ENCODE measurements at regions of chr2 and their contacts with region 1.

Region 1: GRCh38 chr2:85741833-85742455 is 11.8 kb upstream of the ATOH8 start:
- DNase-seq: no peak

Region 2: DNA sequence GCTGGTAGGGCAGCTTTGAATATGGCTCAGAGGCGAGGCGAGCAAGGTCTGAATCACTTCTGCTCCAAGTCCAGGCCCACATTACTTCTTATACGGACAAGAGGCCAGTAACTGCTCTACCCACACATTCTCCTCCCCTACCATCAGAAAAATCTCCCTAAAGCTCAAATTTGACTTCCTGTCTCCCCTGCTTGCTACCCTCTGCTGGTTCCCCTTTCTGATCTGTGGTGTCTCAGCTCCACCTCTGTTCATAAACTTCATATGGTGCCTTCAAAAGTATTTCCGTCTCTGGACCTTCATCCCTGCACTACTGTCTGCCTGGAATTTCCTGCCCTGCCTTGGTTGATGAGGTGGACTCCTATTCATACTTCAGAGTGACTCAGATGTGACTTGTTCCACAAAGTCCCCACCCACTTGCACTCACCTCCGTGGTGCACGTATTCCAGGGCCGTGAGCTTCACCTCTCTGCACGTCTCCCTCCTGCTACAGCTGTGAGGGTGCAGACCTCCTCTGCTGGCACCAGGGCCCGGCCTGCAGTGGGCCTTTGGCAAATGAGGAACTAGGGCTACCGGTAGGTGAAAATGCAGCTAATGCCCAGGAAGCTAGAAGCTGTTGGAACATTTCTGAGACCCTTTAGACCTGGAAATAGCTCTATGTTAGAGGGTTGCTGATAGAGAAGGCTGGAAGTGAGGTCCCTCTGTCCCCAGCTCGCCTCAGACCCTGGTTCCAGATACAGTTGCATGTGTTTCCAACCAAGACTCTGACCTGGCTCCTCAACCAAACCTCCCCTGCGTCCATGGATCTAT is 795.5 kb before region 1 on chr2:
- in situ Hi-C with region 1: no loop called
- DNase-seq: peak; percentile 85

Region 3: GRCh38 chr2:85797921-85798320 is 56.0 kb after region 1 on chr2:
- in situ Hi-C with region 1: loop called (anchors 10 kb)
- DNase-seq: peak; percentile 30

Region 4: DNA sequence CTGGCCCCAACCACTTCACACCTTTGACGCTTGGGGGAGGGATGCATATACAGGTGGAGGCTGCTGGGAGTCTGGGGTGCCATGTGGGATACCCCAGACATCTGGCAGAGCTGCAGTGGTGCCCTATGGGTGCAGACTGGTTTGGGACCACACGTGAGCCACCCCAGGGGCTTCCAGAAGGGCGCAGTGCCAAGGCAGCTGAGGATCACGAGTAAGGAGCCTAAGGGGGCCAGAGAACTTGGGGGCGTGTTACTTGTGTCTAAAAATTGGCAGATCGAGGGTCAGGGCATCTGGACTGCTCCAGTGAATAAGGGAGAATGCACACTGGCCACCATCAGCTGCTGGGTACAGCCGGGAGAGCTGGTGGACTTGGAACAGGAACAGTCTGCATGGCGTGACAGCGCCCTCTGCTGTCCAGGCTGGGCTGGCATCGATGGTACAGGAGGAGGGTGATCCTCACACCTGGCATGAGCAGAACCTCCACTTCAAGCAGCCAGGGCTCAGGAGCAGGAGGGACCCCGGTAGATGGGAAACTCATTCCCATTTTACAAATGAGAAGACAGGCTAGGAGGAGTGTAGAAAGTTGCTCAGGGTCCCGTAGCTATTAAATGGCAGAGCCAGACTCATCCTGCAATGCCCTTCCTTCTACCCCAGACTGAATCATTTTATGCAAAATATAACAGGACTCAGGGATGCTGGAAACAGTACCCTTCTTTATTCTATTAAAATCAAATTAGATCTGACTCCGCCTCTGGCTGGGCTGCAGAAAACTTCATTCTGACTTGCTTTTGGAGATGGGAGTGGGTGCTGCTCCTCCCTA is 72.2 kb after region 1 on chr2:
- in situ Hi-C with region 1: loop called (anchors 10 kb)
- DNase-seq: peak; percentile 84